Gastrocnemius medialis (tissue), 4 donors: ENCODE measurements at regions of chr17 and their contacts with region 1.

Region 1: DNA sequence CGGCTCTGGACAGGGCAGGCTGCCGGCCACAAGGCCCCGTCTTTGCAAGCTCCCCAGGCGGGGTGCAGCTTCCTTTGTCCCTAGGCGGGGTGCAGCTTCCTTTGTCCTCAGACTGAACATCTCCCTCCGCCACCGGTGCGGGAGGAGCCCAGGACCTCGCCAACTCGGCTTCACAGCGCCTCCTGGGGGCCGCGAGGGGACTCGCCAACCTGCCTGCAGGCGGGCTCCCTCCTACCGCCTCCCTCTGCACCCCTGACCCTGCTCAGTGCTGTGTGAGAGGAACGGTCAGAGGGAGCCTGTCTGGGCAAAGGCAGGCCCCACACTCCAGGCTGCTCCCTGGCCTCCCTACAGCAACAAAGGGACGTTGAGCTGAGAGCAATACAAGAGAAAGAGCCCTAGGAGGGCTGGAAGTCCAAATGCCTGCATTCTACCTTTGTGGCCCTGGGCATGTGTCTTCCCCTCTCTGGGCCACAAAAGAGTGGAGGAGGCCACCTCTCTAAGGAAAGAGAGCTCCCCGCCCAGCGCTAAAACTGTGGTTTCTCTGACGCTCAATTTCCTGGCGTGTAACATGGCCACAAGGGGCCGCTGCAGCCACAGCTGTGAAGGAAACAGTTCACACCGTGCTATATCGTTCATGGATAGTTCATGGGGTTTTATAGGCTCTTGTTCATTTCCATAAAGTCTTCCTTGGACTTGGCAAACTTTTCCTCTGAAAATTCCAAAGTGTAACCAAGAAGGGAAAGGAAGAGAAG is 20.9 kb upstream of the KRT19 start:
- DNase-seq: peak; percentile 37 to 56
- ATAC-seq: peak; percentile 86 to 90
- H3K4me3 ChIP-seq: peak overlapping the region in 3 of 4 donors; percentile 4 to 36 (median 17)
- H3K27ac ChIP-seq: no peak overlapping the region
- H3K4me1 ChIP-seq: peaks cover 8 to 13% of the 10 kb centered on the region in 2 donors
- H3K27me3 ChIP-seq: peaks cover 0 to 3% (median 0%) of the 10 kb centered on the region in 3 donors
- CTCF ChIP-seq: peak; percentile 64 to 88 (median 80)
- POLR2A ChIP-seq: no peak

Region 2: DNA sequence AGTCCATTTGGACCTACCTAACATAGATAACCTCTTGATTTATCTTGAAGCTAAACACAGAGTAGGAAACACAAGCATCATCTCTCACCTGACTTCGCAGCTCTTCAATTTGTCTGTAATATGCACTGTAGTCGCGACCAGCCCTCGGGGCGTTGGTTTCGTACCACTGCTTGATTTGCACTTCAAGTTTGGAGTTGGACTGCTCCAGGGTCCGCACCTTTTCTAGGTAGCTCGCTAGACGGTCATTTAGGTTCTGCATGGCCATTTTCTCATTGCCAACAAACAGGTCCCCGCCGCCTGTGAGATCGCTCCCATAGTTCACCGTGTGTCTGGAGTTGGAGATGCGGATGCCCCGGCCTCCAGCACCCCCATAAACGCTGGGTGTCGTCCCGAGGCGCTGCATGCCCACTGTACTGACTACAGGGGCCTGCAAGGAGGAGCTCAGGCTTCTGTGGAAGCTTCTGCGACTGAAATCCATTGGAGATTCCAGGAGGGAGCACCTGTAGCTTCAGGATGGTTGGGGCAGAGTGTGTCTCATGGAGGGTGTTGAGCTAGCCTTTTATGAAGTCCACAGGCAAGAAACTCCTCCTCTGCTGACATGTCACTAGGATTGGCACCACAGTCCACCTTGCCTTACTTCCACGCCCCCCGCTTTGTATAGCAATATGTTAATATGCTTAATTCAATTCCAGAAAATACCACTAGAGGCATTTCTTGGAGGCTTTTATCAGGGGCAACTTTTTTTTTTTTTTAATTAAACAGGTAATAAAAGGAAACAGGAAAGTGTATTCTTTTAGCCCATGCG is 664.1 kb before region 1 on chr17 and contains the start of gene KRT20:
- in situ Hi-C with region 1: loop called in 1 of 4 experiments (anchors 25 kb)
- intact Hi-C with region 1: no loop called
- DNase-seq: no peak
- ATAC-seq: no peak
- H3K4me3 ChIP-seq: no peak within 1 kb of the TSS
- H3K27ac ChIP-seq: no peak within 1 kb of the TSS
- H3K4me1 ChIP-seq: no peaks in the 10 kb centered on the region
- H3K27me3 ChIP-seq: peaks cover 10 to 16% (median 12%) of the 10 kb centered on the region in 3 donors
- CTCF ChIP-seq: no peak
- POLR2A ChIP-seq: no peak
- total RNA-seq, gene KRT20: 2.7 TPM in 1 of 4 donors, not detected in the others

Region 3: GRCh38 chr17:41467561-41467960 is 81.5 kb before region 1 on chr17:
- in situ Hi-C with region 1: no loop called
- intact Hi-C with region 1: no loop called
- DNase-seq: no peak
- ATAC-seq: no peak
- H3K4me3 ChIP-seq: no peak overlapping the region
- H3K27ac ChIP-seq: no peak overlapping the region
- H3K4me1 ChIP-seq: no peaks in the 10 kb centered on the region
- H3K27me3 ChIP-seq: peaks cover 0 to 2% (median 0%) of the 10 kb centered on the region in 3 donors
- CTCF ChIP-seq: no peak
- POLR2A ChIP-seq: no peak

Region 4: GRCh38 chr17:41486809-41487720 is 62.0 kb before region 1 on chr17:
- in situ Hi-C with region 1: loop called in 1 of 4 experiments (anchors 10 kb)
- intact Hi-C with region 1: no loop called
- DNase-seq: no peak
- ATAC-seq: no peak
- H3K4me3 ChIP-seq: no peak overlapping the region
- H3K27ac ChIP-seq: no peak overlapping the region
- H3K4me1 ChIP-seq: no peaks in the 10 kb centered on the region
- H3K27me3 ChIP-seq: no peaks in the 10 kb centered on the region
- CTCF ChIP-seq: no peak
- POLR2A ChIP-seq: no peak

Region 5: GRCh38 chr17:41648411-41649195 is 99.6 kb after region 1 on chr17:
- in situ Hi-C with region 1: loop called in 2 of 4 experiments (anchors 10 kb)
- intact Hi-C with region 1: loop called (anchors 1 kb)
- DNase-seq: peak; percentile 57 to 79
- ATAC-seq: peak; percentile 95 to 96
- H3K4me3 ChIP-seq: peak overlapping the region; percentile 43 to 52 (median 46)
- H3K27ac ChIP-seq: peak overlapping the region in 1 of 4 donors; percentile 30
- H3K4me1 ChIP-seq: peaks cover 7 to 16% of the 10 kb centered on the region in 2 donors
- H3K27me3 ChIP-seq: no peaks in the 10 kb centered on the region
- CTCF ChIP-seq: peak; percentile 82 to 95 (median 91)
- POLR2A ChIP-seq: no peak